Caco-2 (cell line): ENCODE measurements at regions of chr3 and their contacts with region 1.

Region 1: GRCh38 chr3:88219138-88219792 is 69.5 kb downstream of the C3orf38 start:
- DNase-seq: peak; percentile 42 to 57
- H3K4me3 ChIP-seq: no peak overlapping the region
- H3K4me3 Mint-ChIP-seq: no peak overlapping the region
- H3K27ac Mint-ChIP-seq: no peak overlapping the region
- H3K4me1 ChIP-seq: no peaks in the 10 kb centered on the region
- H3K4me1 Mint-ChIP-seq: no peaks in the 10 kb centered on the region
- H3K27me3 ChIP-seq: no peaks in the 10 kb centered on the region
- H3K27me3 Mint-ChIP-seq: peaks cover 3% of the 10 kb centered on the region
- CTCF ChIP-seq: peak; percentile 35 to 61

Region 2: DNA sequence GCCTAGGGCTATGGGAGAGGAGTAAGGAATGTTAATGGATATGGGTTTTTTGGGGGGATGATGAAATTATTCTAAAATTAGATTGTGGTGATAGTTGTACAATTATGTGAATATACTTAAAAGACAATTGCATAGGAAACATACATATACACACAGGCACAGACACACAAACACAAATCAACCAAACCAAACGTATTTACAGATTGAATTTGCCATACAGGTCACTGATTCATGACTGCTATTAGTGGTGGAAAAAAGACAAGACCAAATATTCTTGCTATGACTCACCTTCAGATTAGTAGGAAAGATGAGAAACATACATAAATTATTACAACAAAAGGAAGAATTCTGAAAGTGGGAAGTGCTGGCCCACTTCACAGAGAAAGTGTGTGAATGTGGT is 15.8 kb after region 1 on chr3:
- CTCF ChIA-PET with region 1: no interaction called
- POLR2A ChIA-PET with region 1: no interaction called
- intact Hi-C with region 1: no loop called
- DNase-seq: no peak
- H3K4me3 ChIP-seq: no peak overlapping the region
- H3K4me3 Mint-ChIP-seq: no peak overlapping the region
- H3K27ac Mint-ChIP-seq: no peak overlapping the region
- H3K4me1 ChIP-seq: no peaks in the 10 kb centered on the region
- H3K4me1 Mint-ChIP-seq: no peaks in the 10 kb centered on the region
- H3K27me3 ChIP-seq: no peaks in the 10 kb centered on the region
- H3K27me3 Mint-ChIP-seq: no peaks in the 10 kb centered on the region
- CTCF ChIP-seq: no peak

Region 3: GRCh38 chr3:88301273-88301995 is 82.2 kb after region 1 on chr3:
- CTCF ChIA-PET with region 1: no interaction called
- POLR2A ChIA-PET with region 1: no interaction called
- intact Hi-C with region 1: loop called (anchors 10 kb)
- DNase-seq: no peak
- H3K4me3 ChIP-seq: no peak overlapping the region
- H3K4me3 Mint-ChIP-seq: no peak overlapping the region
- H3K27ac Mint-ChIP-seq: no peak overlapping the region
- H3K4me1 ChIP-seq: no peaks in the 10 kb centered on the region
- H3K4me1 Mint-ChIP-seq: no peaks in the 10 kb centered on the region
- H3K27me3 ChIP-seq: no peaks in the 10 kb centered on the region
- H3K27me3 Mint-ChIP-seq: no peaks in the 10 kb centered on the region
- CTCF ChIP-seq: no peak

Region 4: DNA sequence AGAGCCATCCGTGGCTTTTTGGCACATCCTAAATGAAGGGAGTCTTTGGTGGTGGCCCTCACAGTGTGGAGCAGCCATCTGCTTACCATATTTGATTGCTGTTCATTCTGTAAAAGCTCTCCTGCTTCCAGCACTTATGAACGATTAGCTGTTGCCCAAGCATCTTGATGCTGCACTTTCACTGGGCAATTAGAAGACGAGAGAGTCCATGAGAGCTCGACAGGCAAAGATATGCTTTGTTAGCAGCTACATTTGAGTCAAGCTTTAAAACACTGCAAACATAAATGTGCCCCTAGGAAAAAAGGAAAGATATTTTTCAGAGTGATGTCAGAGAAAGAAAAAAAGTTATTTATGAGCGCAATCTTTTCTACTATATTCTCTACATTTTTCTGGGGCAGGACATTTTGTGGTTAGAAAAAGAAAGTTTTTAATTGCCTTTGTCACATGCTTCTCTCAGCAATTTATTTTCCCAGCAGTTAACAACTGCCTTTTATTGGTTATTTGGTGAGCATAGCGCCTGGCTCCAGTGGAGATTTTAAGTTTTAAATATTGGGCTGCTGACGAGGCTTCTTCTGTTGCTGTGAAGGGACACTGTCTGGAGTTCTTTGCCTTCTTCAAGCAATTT is 398.9 kb after region 1 on chr3:
- CTCF ChIA-PET with region 1: no interaction called
- POLR2A ChIA-PET with region 1: no interaction called
- intact Hi-C with region 1: no loop called
- DNase-seq: no peak
- H3K4me3 ChIP-seq: no peak overlapping the region
- H3K4me3 Mint-ChIP-seq: no peak overlapping the region
- H3K27ac Mint-ChIP-seq: no peak overlapping the region
- H3K4me1 ChIP-seq: no peaks in the 10 kb centered on the region
- H3K4me1 Mint-ChIP-seq: no peaks in the 10 kb centered on the region
- H3K27me3 ChIP-seq: no peaks in the 10 kb centered on the region
- H3K27me3 Mint-ChIP-seq: no peaks in the 10 kb centered on the region
- CTCF ChIP-seq: no peak

Region 5: DNA sequence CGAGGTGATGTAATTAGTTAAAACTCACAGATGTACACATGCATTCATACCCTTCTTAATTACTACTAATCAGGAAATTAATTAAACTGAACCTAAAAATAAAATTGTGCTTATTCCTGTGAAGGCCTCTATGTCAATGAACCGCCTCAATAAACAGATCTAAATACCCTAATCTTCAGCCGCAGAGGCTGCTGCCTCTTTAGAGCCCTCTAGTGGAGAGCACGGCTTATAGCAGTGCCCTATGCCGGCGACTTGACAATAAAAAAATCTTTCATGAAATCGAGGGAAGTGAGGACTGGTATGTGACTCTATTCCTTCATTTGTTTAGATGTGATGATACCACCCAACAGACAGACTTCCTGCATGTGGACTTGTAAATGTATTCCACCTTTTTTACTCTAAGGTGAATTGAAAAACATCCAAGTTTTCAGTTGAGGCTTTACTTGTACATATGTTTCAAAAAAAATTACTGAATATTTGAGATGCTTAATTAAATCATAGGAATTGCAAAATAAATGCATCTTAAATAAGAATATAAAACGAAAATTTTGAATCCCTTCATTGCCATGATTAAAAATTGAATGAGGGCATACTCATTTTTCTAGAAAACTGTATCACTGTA is 879.8 kb after region 1 on chr3:
- CTCF ChIA-PET with region 1: no interaction called
- POLR2A ChIA-PET with region 1: no interaction called
- intact Hi-C with region 1: loop called (anchors 1 kb)
- DNase-seq: peak; percentile 38 to 56
- H3K4me3 ChIP-seq: no peak overlapping the region
- H3K4me3 Mint-ChIP-seq: no peak overlapping the region
- H3K27ac Mint-ChIP-seq: no peak overlapping the region
- H3K4me1 ChIP-seq: no peaks in the 10 kb centered on the region
- H3K4me1 Mint-ChIP-seq: no peaks in the 10 kb centered on the region
- H3K27me3 ChIP-seq: no peaks in the 10 kb centered on the region
- H3K27me3 Mint-ChIP-seq: no peaks in the 10 kb centered on the region
- CTCF ChIP-seq: peak; percentile 77 to 92